Heart right ventricle (tissue), 16 donors: ENCODE measurements at regions of chr11 and their contacts with region 1.

Region 1: GRCh38 chr11:68312117-68312779 is at the start of gene LRP5:
- DNase-seq: no peak
- ATAC-seq: peak in 3 of 8 donors; percentile 15 to 21 (median 17)
- H3K4me3 ChIP-seq: peak within 1 kb of the TSS; percentile 60 to 89 (median 72)
- H3K27ac ChIP-seq: peak within 1 kb of the TSS; percentile 72 to 95 (median 86)
- H3K4me1 ChIP-seq: peaks cover 22 to 49% (median 45%) of the 10 kb centered on the region in 9 donors
- H3K27me3 ChIP-seq: peaks cover 0 to 32% (median 0%) of the 10 kb centered on the region in 7 donors
- CTCF ChIP-seq: no peak
- total RNA-seq, gene LRP5: 33.9 to 73.3 (median 46.3) TPM

Region 2: GRCh38 chr11:68271781-68272608 is 40.3 kb before region 1 on chr11 and contains the start of gene C11orf24:
- intact Hi-C with region 1: loop called in 1 of 10 experiments (anchors 5 kb)
- DNase-seq: peak; percentile 94 to 96
- ATAC-seq: peak; percentile 95 to 98 (median 97)
- H3K4me3 ChIP-seq: peak within 1 kb of the TSS; percentile 60 to 91 (median 80)
- H3K27ac ChIP-seq: peak within 1 kb of the TSS; percentile 76 to 99 (median 95)
- H3K4me1 ChIP-seq: peaks cover 8 to 47% (median 32%) of the 10 kb centered on the region in 9 donors
- H3K27me3 ChIP-seq: no peaks in the 10 kb centered on the region
- CTCF ChIP-seq: no peak
- total RNA-seq, gene C11orf24: 14.9 to 45.6 (median 28.1) TPM